ENCODE measurements at regions of chr9 and their contacts with region 1.

Region 1: DNA sequence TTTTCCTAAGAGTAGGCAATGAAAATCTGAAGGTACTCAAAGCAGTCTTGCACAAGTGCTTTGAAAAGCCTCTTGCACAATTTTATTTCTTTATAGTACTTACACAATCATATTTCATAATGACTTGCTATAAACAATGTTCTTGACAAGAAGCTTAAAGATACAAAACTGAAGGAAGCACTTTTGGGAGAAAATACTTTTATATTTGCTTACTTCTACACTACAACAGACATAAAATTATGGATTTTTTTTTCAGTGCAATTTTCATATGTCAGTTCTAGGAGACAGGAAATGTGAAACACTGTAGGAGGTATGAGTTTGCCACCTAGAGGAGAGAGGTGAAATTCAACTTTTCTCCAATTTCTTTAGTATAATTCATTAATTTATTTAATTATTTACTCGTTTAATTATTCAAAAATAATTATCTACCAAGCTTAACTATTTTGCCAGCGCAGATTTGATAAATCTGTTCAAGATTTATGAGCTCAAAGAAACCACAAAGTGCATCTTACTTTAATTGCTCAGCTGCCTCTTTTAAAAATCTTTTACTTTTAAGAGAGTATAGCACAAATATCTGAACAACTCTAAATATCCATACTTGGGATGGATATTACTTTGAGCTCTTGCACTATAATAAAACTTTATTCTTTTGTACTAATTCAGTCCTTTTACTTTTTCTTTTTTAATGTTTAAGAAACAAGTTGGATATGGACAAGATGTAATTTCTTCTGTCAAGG is 29.0 kb upstream of the CDKN2B start:
- DNase-seq: no peak
- H3K4me3 Mint-ChIP-seq: no peak overlapping the region
- H3K27ac Mint-ChIP-seq: no peak overlapping the region
- H3K4me1 Mint-ChIP-seq: peaks cover 26% of the 10 kb centered on the region
- H3K27me3 Mint-ChIP-seq: peaks cover 34% of the 10 kb centered on the region

Region 2: GRCh38 chr9:21933865-21934264 is 104.3 kb before region 1 on chr9:
- intact Hi-C with region 1: no loop called
- DNase-seq: no peak
- H3K4me3 Mint-ChIP-seq: no peak overlapping the region
- H3K27ac Mint-ChIP-seq: no peak overlapping the region
- H3K4me1 Mint-ChIP-seq: no peaks in the 10 kb centered on the region
- H3K27me3 Mint-ChIP-seq: no peaks in the 10 kb centered on the region

Region 3: DNA sequence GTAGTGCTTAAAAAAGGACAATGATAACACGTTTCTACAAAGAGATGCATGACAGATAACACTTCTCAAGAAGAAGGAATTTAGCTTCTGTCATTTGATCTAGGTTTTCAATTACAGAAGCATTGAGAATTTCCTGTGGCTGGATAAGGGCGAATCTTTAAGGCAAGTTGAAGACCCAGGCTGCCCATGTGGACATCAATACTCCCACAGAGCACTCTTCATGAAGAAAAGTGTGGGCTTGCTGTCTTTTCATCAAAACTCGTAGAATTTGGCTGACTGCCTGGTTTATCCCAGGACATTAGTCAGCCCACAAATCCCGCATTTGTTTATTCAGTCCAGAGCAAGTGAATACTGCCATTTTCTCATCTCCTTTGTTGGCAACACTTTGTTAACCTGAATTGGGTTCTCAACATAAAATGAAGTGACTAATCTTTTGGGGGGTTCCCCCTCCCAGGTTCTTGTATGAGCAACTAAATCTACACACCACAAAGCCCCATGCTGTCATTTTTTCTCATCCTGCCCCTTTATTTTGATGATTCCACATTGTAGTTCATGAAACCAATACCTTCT is 14.3 kb after region 1 on chr9:
- intact Hi-C with region 1: loop called (anchors 1 kb)
- DNase-seq: peak; percentile 79
- H3K4me3 Mint-ChIP-seq: peak overlapping the region; percentile 42
- H3K27ac Mint-ChIP-seq: peak overlapping the region; percentile 62
- H3K4me1 Mint-ChIP-seq: peaks cover 32% of the 10 kb centered on the region
- H3K27me3 Mint-ChIP-seq: peaks cover 20% of the 10 kb centered on the region

Region 4: DNA sequence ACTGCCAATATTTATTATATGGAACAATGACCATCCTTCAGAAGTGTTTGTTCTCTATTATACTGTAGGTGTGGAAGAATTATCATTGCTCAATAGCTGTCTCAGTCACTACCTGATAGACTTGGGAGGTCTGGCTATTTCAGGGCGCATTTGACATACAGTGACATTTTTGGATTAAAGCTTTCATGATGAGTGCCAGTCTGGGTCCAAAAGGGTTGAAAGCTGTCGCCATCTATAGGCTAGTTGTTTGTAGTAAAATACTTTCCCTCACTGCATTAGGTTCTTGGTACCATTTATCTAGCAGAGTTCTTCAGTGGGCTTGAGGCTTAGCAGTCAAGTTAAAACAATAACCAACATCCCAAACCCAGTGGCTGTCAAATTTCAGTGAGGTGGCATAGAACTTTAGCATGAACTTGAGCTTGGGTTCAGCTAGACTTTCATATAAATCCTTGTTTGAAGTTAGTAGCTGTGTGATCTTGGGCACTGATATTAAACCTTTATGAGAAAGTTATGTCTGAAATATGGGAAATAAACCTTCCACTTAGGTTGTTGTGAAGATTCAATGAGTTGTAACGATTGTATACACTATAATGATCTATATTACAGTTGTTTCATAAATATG is 81.5 kb after region 1 on chr9:
- intact Hi-C with region 1: loop called (anchors 1 kb)
- DNase-seq: peak; percentile 78
- H3K4me3 Mint-ChIP-seq: no peak overlapping the region
- H3K27ac Mint-ChIP-seq: no peak overlapping the region
- H3K4me1 Mint-ChIP-seq: peaks cover 13% of the 10 kb centered on the region
- H3K27me3 Mint-ChIP-seq: peaks cover 62% of the 10 kb centered on the region

Region 5: DNA sequence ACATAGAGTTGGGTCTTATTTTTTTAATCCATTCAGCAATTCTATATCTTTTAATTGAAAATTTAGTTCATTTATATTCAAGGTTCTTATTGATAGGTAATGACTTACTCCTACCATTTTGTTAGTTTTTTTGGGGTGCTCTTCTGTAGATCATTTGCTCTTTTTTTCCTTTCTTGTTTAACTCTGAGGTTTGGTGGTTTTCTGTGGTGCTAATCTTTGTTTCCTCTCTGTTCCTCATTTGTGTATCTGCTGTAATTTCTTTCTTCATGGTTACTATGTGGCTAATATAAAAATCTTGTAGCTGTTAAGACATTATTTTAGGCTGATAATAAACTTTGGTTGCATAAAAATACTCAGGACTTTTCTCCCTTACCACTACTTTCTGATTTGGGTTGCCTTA is 226.9 kb after region 1 on chr9:
- intact Hi-C with region 1: no loop called
- DNase-seq: no peak
- H3K4me3 Mint-ChIP-seq: no peak overlapping the region
- H3K27ac Mint-ChIP-seq: no peak overlapping the region
- H3K4me1 Mint-ChIP-seq: no peaks in the 10 kb centered on the region
- H3K27me3 Mint-ChIP-seq: no peaks in the 10 kb centered on the region

Region 6: GRCh38 chr9:22433691-22434090 is 395.6 kb after region 1 on chr9:
- intact Hi-C with region 1: no loop called
- DNase-seq: no peak
- H3K4me3 Mint-ChIP-seq: no peak overlapping the region
- H3K27ac Mint-ChIP-seq: no peak overlapping the region
- H3K4me1 Mint-ChIP-seq: no peaks in the 10 kb centered on the region
- H3K27me3 Mint-ChIP-seq: peaks cover 7% of the 10 kb centered on the region

Measured in activated CD4-positive, alpha-beta T cell treated with anti-CD3 and anti-CD28 coated beads, Interleukin-2, amount 10 ng/mL, durations not matched to agents 24 days and 14 days (primary cell).